PC-3 (cell line): ENCODE measurements at regions of chr2 and their contacts with region 1.

Region 1: DNA sequence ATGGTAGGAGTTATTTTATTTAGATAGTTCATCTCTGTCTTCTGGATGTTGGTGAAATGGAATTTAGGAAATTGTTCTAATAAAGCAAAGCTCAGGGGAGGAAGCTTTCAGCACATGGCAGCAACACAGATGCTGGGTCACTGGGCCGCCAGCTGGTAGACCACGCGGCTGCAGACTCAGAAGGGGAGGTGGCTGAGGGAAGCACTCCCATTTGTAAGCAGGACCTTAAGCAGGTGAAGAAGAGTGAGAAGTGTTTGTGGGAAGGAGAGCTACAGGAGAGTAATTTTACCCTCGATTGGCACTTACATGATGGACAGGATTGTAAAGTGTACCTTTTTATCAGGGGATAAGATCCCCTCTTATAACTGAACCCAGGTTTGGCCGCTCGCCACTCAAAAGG is 24.4 kb downstream of the NMS start:
- DNase-seq: no peak
- ATAC-seq: no peak
- H3K4me3 ChIP-seq: no peak overlapping the region
- H3K27ac ChIP-seq: no peak overlapping the region
- H3K4me1 ChIP-seq: no peaks in the 10 kb centered on the region
- H3K27me3 ChIP-seq: peaks cover 40% of the 10 kb centered on the region
- CTCF ChIP-seq: no peak

Region 2: GRCh38 chr2:100577777-100578176 is 83.1 kb after region 1 on chr2:
- CTCF ChIA-PET with region 1: interaction called, 13 read pairs
- POLR2A ChIA-PET with region 1: no interaction called
- intact Hi-C with region 1: no loop called
- DNase-seq: peak; percentile 62
- ATAC-seq: peak; percentile 79
- H3K4me3 ChIP-seq: no peak overlapping the region
- H3K27ac ChIP-seq: no peak overlapping the region
- H3K4me1 ChIP-seq: no peaks in the 10 kb centered on the region
- H3K27me3 ChIP-seq: no peaks in the 10 kb centered on the region
- CTCF ChIP-seq: no peak